MCF 10A (cell line): ENCODE measurements at regions of chr9 and their contacts with region 1.

Region 1: GRCh38 chr9:12784461-12785259 is 9.8 kb downstream of the LURAP1L start:
- DNase-seq: peak; percentile 95
- H3K4me3 Mint-ChIP-seq: peak overlapping the region; percentile 36
- H3K27ac Mint-ChIP-seq: peak overlapping the region; percentile 99
- H3K4me1 Mint-ChIP-seq: peaks cover 48% of the 10 kb centered on the region
- H3K27me3 Mint-ChIP-seq: no peaks in the 10 kb centered on the region
- CTCF ChIP-seq: no peak

Region 2: GRCh38 chr9:12764150-12764549 is 20.5 kb before region 1 on chr9:
- CTCF ChIA-PET with region 1: no interaction called
- POLR2A ChIA-PET with region 1: no interaction called
- intact Hi-C with region 1: no loop called
- DNase-seq: no peak
- H3K4me3 Mint-ChIP-seq: no peak overlapping the region
- H3K27ac Mint-ChIP-seq: no peak overlapping the region
- H3K4me1 Mint-ChIP-seq: peaks cover 15% of the 10 kb centered on the region
- H3K27me3 Mint-ChIP-seq: no peaks in the 10 kb centered on the region
- CTCF ChIP-seq: no peak

Region 3: DNA sequence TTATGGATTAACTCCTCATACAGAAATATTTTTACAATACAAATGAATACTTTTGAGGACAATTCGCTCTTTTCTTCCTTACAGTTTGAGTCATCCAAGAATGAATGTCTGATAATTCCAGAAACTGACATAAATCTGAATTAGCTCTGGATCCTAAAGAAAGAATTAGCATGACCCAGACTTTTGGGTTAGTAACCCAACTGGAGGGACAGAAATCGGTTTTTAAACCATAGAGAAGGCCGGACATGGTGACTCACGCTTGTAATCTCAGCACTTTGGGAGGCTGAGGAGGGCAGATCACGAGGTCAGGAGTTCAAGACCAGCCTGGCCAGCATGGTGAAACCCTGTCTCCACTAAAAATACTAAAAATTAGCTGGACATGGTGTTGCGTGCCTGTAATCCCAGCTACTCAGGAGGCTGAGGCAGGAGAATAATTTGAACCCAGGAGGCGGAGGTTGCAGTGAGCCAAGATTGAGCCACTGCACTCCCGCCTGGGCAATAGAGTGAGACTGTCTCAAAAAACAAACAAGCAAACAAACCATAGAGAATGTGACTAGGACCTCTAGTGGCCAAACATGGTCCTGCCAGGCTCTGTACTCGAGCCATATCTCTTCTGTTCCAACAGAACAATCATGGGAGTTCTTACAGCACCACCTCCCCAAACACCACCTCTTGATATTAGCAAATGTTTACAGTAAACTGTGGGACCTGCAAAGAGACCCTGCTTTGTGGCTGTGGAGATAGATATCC is 35.0 kb after region 1 on chr9:
- CTCF ChIA-PET with region 1: interaction called, 5 read pairs
- POLR2A ChIA-PET with region 1: interaction called, 54 read pairs
- intact Hi-C with region 1: loop called (anchors 1 kb)
- DNase-seq: peak; percentile 43
- H3K4me3 Mint-ChIP-seq: no peak overlapping the region
- H3K27ac Mint-ChIP-seq: peak overlapping the region; percentile 97
- H3K4me1 Mint-ChIP-seq: peaks cover 36% of the 10 kb centered on the region
- H3K27me3 Mint-ChIP-seq: no peaks in the 10 kb centered on the region
- CTCF ChIP-seq: peak; percentile 32